Heart right ventricle (tissue), 16 donors: ENCODE measurements at regions of chr10 and their contacts with region 1.

Region 1: DNA sequence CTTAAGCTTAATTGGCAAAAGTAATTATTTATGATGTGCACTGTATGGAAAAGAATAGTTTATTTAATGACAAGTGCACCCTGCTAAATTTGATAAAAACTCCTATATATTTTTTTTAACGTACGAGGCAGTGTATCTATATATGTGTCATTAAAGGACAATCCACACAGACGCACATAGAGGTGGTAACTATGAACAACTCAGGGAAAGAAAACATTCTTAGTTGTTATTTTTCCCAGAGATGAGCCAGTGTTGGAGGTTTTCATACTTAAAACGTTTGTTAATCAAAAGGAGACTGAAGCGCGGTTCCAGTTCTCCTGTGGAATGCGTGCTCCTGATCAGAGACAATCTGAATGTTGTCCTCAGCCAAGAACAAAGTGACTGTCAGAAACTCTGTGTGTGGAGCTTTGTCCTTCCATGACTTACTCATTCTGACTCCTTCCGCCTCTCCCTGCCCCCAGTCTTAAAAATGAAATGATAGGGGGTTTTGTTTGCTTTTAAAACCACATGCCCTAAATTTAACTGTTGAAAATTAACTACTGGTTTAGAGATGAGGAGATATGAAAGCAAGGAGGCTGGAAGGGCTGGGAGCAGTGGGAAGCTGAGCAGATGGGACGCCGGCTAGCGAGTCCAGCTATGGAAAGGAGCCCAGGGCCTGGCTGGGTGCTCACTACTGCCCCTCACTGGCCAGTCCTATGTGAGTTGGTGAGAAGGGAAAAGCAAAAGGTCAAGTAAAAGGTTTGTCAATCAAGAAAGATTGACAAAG is 99.6 kb downstream of the SVIL start:
- DNase-seq: peak in 1 of 2 donors; percentile 56
- ATAC-seq: peak; percentile 49 to 81 (median 72)
- H3K4me3 ChIP-seq: peak overlapping the region in 3 of 10 donors; percentile 3 to 21 (median 9)
- H3K27ac ChIP-seq: peak overlapping the region; percentile 28 to 85 (median 77)
- H3K4me1 ChIP-seq: peaks cover 6 to 58% (median 37%) of the 10 kb centered on the region in 9 donors
- H3K27me3 ChIP-seq: no peaks in the 10 kb centered on the region
- CTCF ChIP-seq: peak; percentile 35 to 70 (median 65)

Region 2: DNA sequence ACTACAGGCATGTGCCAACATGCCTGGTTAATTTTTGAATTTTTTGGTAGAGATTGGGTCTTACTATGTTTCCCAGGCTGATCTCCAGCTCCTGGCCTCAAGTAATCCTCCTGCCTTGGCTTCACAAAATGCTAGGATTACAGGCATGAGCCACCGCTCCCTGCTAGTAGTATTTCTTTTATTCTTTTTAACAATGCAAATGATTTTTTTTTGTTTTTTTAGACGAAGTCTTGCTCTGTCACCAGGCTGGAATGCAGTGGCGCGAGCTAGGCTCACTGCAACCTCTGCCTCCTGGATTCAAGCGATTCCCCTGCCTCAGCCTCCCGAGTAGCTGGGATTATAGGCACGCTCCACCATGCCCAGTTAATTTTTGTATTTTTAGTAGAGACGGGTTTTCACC is 41.5 kb after region 1 on chr10:
- intact Hi-C with region 1: loop called in 2 of 10 experiments (anchors 5 to 10 kb)
- DNase-seq: no peak
- ATAC-seq: no peak
- H3K4me3 ChIP-seq: no peak overlapping the region
- H3K27ac ChIP-seq: no peak overlapping the region
- H3K4me1 ChIP-seq: peaks cover 0 to 48% (median 4%) of the 10 kb centered on the region in 9 donors
- H3K27me3 ChIP-seq: no peaks in the 10 kb centered on the region
- CTCF ChIP-seq: no peak

Region 3: GRCh38 chr10:29585488-29585980 is 50.3 kb after region 1 on chr10:
- intact Hi-C with region 1: loop called in 1 of 10 experiments (anchors 10 kb)
- DNase-seq: no peak
- ATAC-seq: peak in 7 of 8 donors; percentile 16 to 36 (median 19)
- H3K4me3 ChIP-seq: no peak overlapping the region
- H3K27ac ChIP-seq: peak overlapping the region in 7 of 10 donors; percentile 15 to 84 (median 74)
- H3K4me1 ChIP-seq: peaks cover 14 to 78% (median 51%) of the 10 kb centered on the region in 9 donors
- H3K27me3 ChIP-seq: no peaks in the 10 kb centered on the region
- CTCF ChIP-seq: peak in 2 of 9 donors; percentile 14 to 15

Region 4: GRCh38 chr10:29895456-29895855 is 360.3 kb after region 1 on chr10:
- intact Hi-C with region 1: no loop called
- DNase-seq: peak; percentile 59 to 88
- ATAC-seq: peak; percentile 86 to 96 (median 92)
- H3K4me3 ChIP-seq: no peak overlapping the region
- H3K27ac ChIP-seq: peak overlapping the region in 8 of 10 donors; percentile 21 to 81 (median 72)
- H3K4me1 ChIP-seq: peaks cover 0 to 19% (median 15%) of the 10 kb centered on the region in 9 donors
- H3K27me3 ChIP-seq: no peaks in the 10 kb centered on the region
- CTCF ChIP-seq: no peak